GM12878 (cell line): ENCODE measurements at regions of chr17 and their contacts with region 1.

Region 1: DNA sequence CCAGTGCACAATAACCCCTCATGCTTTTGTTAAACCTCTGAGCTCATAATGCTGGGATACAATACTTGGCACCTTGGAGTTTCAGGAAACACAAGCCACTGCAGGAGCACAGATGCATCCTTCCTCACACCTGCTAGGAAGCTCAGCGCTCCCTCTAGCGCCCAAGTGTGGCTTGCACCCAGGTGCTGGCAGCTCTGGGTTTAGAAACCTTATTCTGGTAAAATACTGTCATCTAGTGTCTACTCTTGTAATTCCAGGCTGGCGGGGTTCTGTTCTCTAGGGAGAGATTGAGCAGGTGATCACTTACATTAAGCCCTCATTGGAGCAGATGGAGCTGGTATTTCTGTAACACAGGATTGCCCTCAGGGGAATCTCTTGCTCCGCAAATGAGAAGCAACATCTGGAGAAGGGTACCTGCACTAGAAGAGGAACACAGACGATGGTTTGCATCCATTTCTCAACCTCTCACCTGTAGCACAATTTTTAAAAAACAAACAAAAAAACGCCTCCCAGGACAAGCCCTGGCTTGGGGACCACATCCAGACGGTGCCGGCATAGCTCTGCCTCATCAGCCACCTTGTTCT is 1.5 kb downstream of the CCL1 start:
- DNase-seq: no peak
- ATAC-seq: peak; percentile 94
- H3K4me3 ChIP-seq: no peak overlapping the region
- H3K27ac ChIP-seq: no peak overlapping the region
- H3K4me1 ChIP-seq: peaks cover 3% of the 10 kb centered on the region; the same call in 1 of the 2 replicates
- H3K27me3 ChIP-seq: peaks cover 2 to 15% of the 10 kb centered on the region in 2 experiments
- CTCF ChIP-seq: peak; percentile 98 to 99 (median 99)
- EP300 ChIP-seq: no peak
- POLR2A ChIP-seq: no peak
- RAD21 ChIP-seq: peak; percentile 96

Region 2: DNA sequence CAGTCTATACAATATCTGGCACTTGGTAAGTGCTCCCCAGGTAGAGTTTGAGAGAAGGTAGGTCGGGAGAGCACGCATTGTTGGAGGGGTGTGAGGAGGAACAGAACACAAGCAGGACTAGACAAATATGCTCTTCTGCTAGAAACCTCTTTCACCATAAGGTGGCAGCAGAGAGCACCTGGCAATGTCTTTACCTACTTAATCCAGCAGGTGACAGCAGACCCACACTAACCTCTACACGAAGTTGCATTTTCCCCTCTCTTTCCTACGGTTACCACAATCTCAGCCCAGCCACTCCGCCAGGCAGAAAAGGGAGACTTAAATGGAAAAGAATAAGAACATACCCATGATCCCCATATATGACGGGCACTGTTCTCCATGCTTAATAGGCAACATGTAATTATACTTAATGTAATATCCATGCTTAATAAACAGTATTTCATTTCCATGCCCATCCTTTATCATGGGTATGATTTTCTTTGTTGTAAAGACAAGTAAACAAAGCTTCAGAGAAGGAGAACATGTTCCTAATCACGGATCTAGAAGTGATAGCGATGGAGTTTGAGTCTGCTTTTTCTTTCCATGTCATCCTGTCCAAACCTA is 161.5 kb before region 1 on chr17:
- CTCF ChIA-PET with region 1: interaction called, 264 read pairs
- POLR2A ChIA-PET with region 1: no interaction called
- RAD21 ChIA-PET with region 1: interaction called, 83 read pairs
- SMC1A ChIA-PET with region 1: interaction called, 80 read pairs
- in situ Hi-C with region 1: loop called (anchors 5 kb)
- intact Hi-C with region 1: loop called (anchors 1 kb)
- DNase-seq: peak; percentile 36
- ATAC-seq: peak; percentile 91
- H3K4me3 ChIP-seq: no peak overlapping the region
- H3K27ac ChIP-seq: no peak overlapping the region
- H3K4me1 ChIP-seq: no peaks in the 10 kb centered on the region
- H3K27me3 ChIP-seq: no peaks in the 10 kb centered on the region; a peak in 1 of 4 replicates
- CTCF ChIP-seq: peak; percentile 100; a peak in 5 of 6 replicates
- EP300 ChIP-seq: no peak
- POLR2A ChIP-seq: no peak
- RAD21 ChIP-seq: peak; percentile 97

Region 3: DNA sequence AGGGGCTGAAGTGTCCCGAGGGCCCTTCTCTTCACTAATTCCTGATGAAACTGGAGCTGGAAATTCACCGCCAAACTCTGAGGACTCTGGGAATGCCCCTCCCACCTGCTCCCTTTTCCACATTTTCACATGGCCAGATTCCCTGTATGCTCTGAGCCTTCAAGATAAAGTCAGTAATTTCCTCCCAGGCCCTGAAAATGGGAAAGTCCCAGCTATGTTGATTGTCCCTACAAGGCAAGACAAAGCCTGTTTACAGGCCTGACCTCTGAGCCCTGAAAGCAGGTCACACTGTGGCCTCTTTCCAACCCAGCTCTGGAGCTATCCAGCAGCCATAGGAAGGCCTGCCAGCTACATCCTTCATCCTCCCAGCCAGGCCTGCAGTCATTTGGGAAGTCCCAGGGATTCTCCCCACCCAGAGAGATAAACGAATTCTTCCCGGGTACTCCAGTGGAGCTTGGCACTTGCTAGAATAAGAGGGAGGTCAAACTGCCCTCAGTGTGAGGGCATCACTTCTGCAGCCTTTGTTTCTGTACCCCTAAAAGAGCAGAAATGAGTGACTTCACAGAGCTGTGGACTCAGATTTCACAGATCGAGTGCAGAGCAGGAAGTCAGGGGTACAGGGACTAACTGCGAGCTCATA is 126.1 kb before region 1 on chr17:
- CTCF ChIA-PET with region 1: interaction called, 10 read pairs
- POLR2A ChIA-PET with region 1: no interaction called
- RAD21 ChIA-PET with region 1: no interaction called
- SMC1A ChIA-PET with region 1: interaction called, 3 read pairs
- in situ Hi-C with region 1: no loop called
- intact Hi-C with region 1: no loop called
- DNase-seq: no peak
- ATAC-seq: peak; percentile 23; the same call in 1 of the 3 replicates
- H3K4me3 ChIP-seq: no peak overlapping the region
- H3K27ac ChIP-seq: no peak overlapping the region
- H3K4me1 ChIP-seq: no peaks in the 10 kb centered on the region
- H3K27me3 ChIP-seq: no peaks in the 10 kb centered on the region
- CTCF ChIP-seq: no peak
- EP300 ChIP-seq: no peak
- POLR2A ChIP-seq: no peak
- RAD21 ChIP-seq: no peak

Region 4: GRCh38 chr17:34291721-34292348 is 69.7 kb before region 1 on chr17:
- CTCF ChIA-PET with region 1: no interaction called
- POLR2A ChIA-PET with region 1: no interaction called
- RAD21 ChIA-PET with region 1: no interaction called
- SMC1A ChIA-PET with region 1: no interaction called
- in situ Hi-C with region 1: no loop called
- intact Hi-C with region 1: no loop called
- DNase-seq: no peak
- ATAC-seq: no peak
- H3K4me3 ChIP-seq: no peak overlapping the region
- H3K27ac ChIP-seq: no peak overlapping the region
- H3K4me1 ChIP-seq: no peaks in the 10 kb centered on the region
- H3K27me3 ChIP-seq: 0 out of 4 replicates have a peak, but pooled peaks cover 0 to 5% of the 10 kb centered on the region in 2 experiments
- CTCF ChIP-seq: no peak
- EP300 ChIP-seq: no peak
- POLR2A ChIP-seq: no peak
- RAD21 ChIP-seq: no peak

Region 5: DNA sequence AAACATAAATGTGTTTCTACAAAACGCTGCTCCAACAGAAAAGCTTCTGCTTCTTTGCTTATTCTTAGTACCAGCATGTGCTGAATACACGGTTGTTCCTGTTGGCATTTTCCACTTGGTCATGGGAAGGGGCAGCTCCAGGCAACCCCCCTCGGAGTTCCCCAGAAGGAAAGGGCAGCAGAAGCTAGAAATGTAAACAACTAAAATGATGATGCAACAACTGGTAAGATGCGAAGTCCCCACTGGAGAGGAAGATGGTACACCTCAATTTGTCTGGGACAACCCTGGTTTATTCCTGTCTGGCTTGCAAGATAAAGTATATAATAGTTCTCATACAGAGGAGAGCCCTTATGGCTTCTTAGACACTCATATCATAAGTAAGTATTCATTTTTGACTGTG is 14.5 kb before region 1 on chr17:
- CTCF ChIA-PET with region 1: interaction called, 19 read pairs
- POLR2A ChIA-PET with region 1: no interaction called
- RAD21 ChIA-PET with region 1: interaction called, 3 read pairs
- SMC1A ChIA-PET with region 1: interaction called, 7 read pairs
- in situ Hi-C with region 1: no loop called
- intact Hi-C with region 1: no loop called
- DNase-seq: no peak
- ATAC-seq: no peak
- H3K4me3 ChIP-seq: no peak overlapping the region
- H3K27ac ChIP-seq: no peak overlapping the region
- H3K4me1 ChIP-seq: no peaks in the 10 kb centered on the region
- H3K27me3 ChIP-seq: no peaks in the 10 kb centered on the region; a peak in 1 of 4 replicates
- CTCF ChIP-seq: no peak
- EP300 ChIP-seq: no peak
- POLR2A ChIP-seq: no peak
- RAD21 ChIP-seq: no peak

Region 6: GRCh38 chr17:34386697-34387550 is 25.4 kb after region 1 on chr17:
- CTCF ChIA-PET with region 1: interaction called, 40 read pairs
- POLR2A ChIA-PET with region 1: interaction called, 3 read pairs
- RAD21 ChIA-PET with region 1: interaction called, 6 read pairs
- SMC1A ChIA-PET with region 1: interaction called, 20 read pairs
- in situ Hi-C with region 1: no loop called
- intact Hi-C with region 1: no loop called
- DNase-seq: no peak
- ATAC-seq: no peak
- H3K4me3 ChIP-seq: no peak overlapping the region
- H3K27ac ChIP-seq: no peak overlapping the region
- H3K4me1 ChIP-seq: peaks cover 16% of the 10 kb centered on the region
- H3K27me3 ChIP-seq: no peaks in the 10 kb centered on the region
- CTCF ChIP-seq: no peak
- EP300 ChIP-seq: no peak
- POLR2A ChIP-seq: no peak
- RAD21 ChIP-seq: no peak

Region 7: DNA sequence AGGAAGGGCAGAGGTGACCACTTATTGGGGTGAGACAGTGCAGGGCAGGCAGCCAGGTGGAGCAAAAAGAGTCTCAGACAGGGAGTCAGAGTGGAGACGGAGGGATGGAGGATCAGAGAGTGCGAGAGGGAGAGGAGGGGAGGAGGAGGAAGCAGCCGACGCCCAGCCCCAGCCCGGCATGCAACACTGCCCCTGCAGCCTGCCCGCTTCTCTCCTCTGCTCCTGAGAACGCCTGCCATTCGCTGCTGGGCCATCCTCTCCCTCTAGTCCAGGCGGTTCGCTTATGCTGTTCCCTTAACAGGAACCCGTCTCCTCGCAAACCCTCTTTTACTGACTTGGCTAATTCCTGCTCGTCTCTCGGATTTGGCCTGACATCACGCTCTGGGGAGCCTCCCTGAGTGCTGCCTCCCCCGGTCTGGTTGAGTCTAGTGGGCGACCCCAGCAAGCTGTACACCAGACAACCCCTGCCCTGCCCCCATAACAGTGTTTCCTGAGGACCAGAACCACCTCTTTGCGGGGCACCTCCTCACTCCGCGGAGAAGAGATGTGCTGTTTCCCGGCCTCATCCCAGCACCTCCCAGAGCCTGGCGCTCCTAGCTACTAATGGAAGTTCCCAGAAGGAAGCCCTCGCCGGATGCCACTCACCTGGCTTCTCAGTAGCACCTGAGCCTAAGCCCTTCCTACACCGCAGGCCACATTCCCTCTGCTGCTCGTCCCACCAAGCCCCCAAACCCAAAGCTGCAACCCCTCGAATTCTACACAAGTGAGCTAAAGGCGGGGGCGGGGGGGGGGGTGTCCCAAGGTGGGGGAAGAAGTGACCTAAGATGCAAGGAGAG is 62.6 kb after region 1 on chr17:
- CTCF ChIA-PET with region 1: no interaction called
- POLR2A ChIA-PET with region 1: no interaction called
- RAD21 ChIA-PET with region 1: no interaction called
- SMC1A ChIA-PET with region 1: no interaction called
- in situ Hi-C with region 1: no loop called
- intact Hi-C with region 1: no loop called
- DNase-seq: no peak
- ATAC-seq: no peak
- H3K4me3 ChIP-seq: no peak overlapping the region
- H3K27ac ChIP-seq: no peak overlapping the region
- H3K4me1 ChIP-seq: no peaks in the 10 kb centered on the region
- H3K27me3 ChIP-seq: peaks cover 0 to 8% of the 10 kb centered on the region in 2 experiments
- CTCF ChIP-seq: no peak
- EP300 ChIP-seq: no peak
- POLR2A ChIP-seq: no peak
- RAD21 ChIP-seq: no peak

Region 8: DNA sequence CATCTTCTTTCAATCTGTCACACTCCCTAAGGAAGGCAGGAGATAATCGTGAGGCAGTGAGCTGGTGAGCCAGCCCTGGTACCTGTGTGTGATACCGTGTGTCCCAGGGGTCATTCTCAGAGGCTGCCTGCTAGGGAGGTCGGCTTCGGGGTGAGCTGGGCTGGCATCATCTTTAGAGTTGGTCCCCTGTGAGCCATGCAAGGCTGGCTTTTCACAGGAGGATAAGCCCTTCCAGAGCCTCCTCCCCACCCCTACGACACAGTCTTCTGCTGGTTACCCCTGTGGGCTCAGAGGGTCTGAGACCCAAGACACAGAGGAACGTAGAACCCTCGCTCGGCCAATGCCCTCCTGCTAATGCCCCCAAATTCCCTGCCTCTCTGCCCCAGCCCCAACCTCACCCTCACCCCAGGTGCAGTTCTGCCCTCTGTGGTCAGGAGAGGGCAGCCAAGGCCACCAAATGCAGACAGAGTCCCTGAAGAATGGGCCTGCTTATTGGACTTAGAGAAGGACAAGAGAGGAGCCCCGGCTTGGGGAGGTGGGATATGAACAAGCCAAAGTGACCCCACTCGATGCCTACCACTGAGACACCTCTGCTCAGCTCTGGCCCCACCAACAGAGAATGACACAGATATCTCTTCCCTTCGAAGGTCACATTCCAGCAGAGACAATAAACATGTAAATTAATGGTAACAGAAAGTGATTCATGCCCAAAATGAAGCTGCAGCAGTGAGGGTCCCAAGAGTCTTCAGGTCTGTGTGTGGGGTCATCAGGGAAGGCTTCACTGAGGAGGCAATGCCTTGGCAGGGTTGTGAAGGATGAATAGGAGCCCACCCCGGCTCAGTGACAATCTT is 82.3 kb after region 1 on chr17:
- CTCF ChIA-PET with region 1: no interaction called
- POLR2A ChIA-PET with region 1: no interaction called
- RAD21 ChIA-PET with region 1: no interaction called
- SMC1A ChIA-PET with region 1: no interaction called
- in situ Hi-C with region 1: no loop called
- intact Hi-C with region 1: no loop called
- DNase-seq: no peak
- ATAC-seq: peak; percentile 57; the same call in 2 of the 3 replicates
- H3K4me3 ChIP-seq: no peak overlapping the region
- H3K27ac ChIP-seq: no peak overlapping the region
- H3K4me1 ChIP-seq: no peaks in the 10 kb centered on the region
- H3K27me3 ChIP-seq: peaks cover 3 to 5% of the 10 kb centered on the region in 2 experiments; a peak in 3 of 4 replicates
- CTCF ChIP-seq: peak in 2 of 3 experiments; percentile 15 to 34; a peak in 2 of 6 replicates
- EP300 ChIP-seq: no peak
- POLR2A ChIP-seq: no peak
- RAD21 ChIP-seq: peak; percentile 44